ENCODE measurements at regions of chr16 and their contacts with region 1.

Region 1: DNA sequence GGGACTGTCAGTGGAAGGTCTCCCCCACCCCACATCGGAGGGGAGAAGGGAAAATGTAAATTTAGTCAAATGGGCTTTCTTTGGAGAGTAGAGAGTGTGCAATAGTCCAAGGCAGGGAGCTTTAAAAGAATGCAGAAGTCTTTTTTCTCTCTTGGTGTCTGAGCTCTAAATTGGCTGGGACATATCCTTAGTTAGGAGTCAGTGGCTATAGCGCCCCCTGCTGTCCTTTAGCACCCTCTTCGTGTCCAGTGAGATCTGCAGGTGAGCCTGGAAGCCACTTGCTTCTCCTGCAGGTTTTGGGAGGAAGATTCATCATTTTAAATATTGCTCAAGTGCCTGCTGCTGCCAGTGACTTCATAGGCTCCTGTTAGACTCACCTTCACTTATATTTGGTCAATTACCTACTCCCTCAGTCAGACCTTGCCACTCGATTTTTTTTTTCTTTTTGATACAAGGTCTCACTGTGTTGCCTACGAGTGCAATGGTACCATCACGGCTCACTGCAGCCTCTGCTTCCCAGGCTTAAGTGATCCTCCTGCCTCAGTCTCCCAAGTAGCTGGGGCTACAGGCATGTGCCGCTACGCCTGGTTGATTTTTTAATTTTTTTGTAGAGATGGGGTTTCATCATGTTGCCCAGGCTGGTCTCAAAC is 174.8 kb downstream of the PRKCB start:
- DNase-seq: peak; percentile 60
- ATAC-seq: peak; percentile 61
- H3K4me3 ChIP-seq: no peak overlapping the region
- H3K27ac ChIP-seq: peak overlapping the region; percentile 53; the same call in 1 of the 2 replicates
- H3K4me1 ChIP-seq: peaks cover 65% of the 10 kb centered on the region
- H3K27me3 ChIP-seq: no peaks in the 10 kb centered on the region
- CTCF ChIP-seq: peak; percentile 71 to 84 (median 81)
- EP300 ChIP-seq: no peak
- POLR2A ChIP-seq: no peak
- RAD21 ChIP-seq: peak; percentile 90

Region 2: GRCh38 chr16:23835390-23836077 is 175.0 kb before region 1 on chr16 and contains the start of gene PRKCB:
- CTCF ChIA-PET with region 1: interaction called, 38 read pairs
- POLR2A ChIA-PET with region 1: interaction called, 3 read pairs
- RAD21 ChIA-PET with region 1: interaction called, 39 read pairs
- SMC1A ChIA-PET with region 1: interaction called, 100 read pairs
- in situ Hi-C with region 1: no loop called
- intact Hi-C with region 1: loop called (anchors 1 kb)
- DNase-seq: no peak
- ATAC-seq: peak; percentile 74
- H3K4me3 ChIP-seq: peak within 1 kb of the TSS; percentile 97
- H3K27ac ChIP-seq: peak within 1 kb of the TSS; percentile 83
- H3K4me1 ChIP-seq: peaks cover 13% of the 10 kb centered on the region
- H3K27me3 ChIP-seq: no peaks in the 10 kb centered on the region
- CTCF ChIP-seq: no peak
- EP300 ChIP-seq: no peak
- POLR2A ChIP-seq: peak; percentile 74; the same call in 1 of the 2 replicates
- RAD21 ChIP-seq: no peak
- polyA plus RNA-seq, gene PRKCB: 42.4 to 60.2 TPM

Region 3: DNA sequence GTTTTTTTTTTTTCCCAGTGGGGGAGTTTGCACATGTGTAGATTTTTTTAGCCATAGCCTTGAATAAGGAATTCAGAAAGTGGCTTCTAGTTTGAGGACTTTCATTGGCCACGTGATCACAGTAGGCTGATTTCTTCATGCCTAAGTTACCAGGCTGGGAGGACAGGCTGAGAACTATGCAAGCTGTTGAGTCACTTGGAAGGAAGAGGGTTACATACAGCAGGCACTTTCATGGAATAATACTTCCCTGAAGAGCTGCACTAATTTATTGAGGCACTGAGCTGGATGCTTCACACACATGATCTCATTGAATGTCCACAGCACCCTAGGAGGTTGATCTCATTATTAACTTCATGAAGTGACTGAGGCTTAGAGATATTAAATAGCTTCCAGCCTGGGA is 152.0 kb before region 1 on chr16:
- CTCF ChIA-PET with region 1: interaction called, 30 read pairs
- POLR2A ChIA-PET with region 1: interaction called, 4 read pairs
- RAD21 ChIA-PET with region 1: interaction called, 13 read pairs
- SMC1A ChIA-PET with region 1: interaction called, 14 read pairs
- in situ Hi-C with region 1: no loop called
- intact Hi-C with region 1: loop called (anchors 5 kb)
- DNase-seq: no peak
- ATAC-seq: no peak
- H3K4me3 ChIP-seq: no peak overlapping the region
- H3K27ac ChIP-seq: peak overlapping the region; percentile 83
- H3K4me1 ChIP-seq: peaks cover 89% of the 10 kb centered on the region
- H3K27me3 ChIP-seq: no peaks in the 10 kb centered on the region
- CTCF ChIP-seq: no peak
- EP300 ChIP-seq: no peak
- POLR2A ChIP-seq: no peak
- RAD21 ChIP-seq: no peak

Region 4: DNA sequence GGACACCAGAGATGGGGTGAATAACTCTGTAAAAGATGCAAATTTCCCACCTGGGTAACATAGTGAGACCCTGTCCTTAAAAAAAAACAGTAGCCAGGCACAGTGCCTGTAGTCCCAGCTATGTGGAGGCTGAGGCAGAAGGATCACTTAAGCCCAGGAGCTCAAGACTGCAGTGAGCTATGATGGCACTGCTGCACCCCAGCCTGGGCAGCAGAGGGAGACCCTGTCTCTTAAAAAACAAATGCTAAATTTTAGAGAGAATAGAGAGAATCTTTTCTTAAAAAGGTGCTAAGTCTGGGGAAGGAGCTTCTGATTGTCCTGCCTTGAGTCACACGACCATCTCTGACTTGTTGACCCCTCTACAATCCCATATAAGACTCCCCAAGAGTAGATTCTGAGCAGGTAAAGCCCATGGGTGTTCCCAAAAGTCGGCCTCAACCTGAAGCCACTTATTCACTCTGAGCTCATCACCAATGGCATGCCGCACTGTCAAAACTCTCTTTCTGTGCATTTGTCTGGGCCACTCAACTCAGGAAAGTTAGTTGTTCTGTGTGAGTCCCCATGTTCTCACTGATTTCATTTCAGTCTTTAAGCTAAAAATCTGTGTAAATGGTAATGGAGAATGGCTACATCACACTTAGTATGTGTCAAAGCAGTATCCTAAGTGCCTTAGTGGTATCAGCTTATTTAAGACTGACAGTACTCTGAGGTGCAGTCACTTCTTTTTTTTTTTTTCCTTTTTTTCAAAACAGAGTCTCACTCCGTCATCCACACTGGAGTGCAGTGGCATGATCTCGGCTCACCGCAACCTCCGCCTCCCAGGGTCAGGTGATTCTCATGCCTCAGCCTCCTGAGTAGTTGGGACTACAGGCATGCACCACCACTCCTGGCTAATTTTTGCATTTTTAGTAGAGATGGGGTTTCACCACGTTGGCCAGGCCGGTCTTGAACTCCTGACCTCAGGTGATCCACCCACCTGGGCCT is 133.2 kb before region 1 on chr16:
- CTCF ChIA-PET with region 1: interaction called, 55 read pairs
- POLR2A ChIA-PET with region 1: interaction called, 4 read pairs
- RAD21 ChIA-PET with region 1: interaction called, 37 read pairs
- SMC1A ChIA-PET with region 1: interaction called, 27 read pairs
- in situ Hi-C with region 1: no loop called
- intact Hi-C with region 1: loop called (anchors 5 kb)
- DNase-seq: no peak
- ATAC-seq: no peak; the same call in 2 of the 3 replicates
- H3K4me3 ChIP-seq: no peak overlapping the region
- H3K27ac ChIP-seq: peak overlapping the region; percentile 69
- H3K4me1 ChIP-seq: peaks cover 63% of the 10 kb centered on the region
- H3K27me3 ChIP-seq: no peaks in the 10 kb centered on the region
- CTCF ChIP-seq: peak; percentile 23 to 28 (median 27); a peak in 2 of 6 replicates
- EP300 ChIP-seq: no peak
- POLR2A ChIP-seq: no peak
- RAD21 ChIP-seq: peak; percentile 53

Region 5: GRCh38 chr16:23917621-23918020 is 92.9 kb before region 1 on chr16:
- CTCF ChIA-PET with region 1: interaction called, 15 read pairs
- POLR2A ChIA-PET with region 1: interaction called, 4 read pairs
- RAD21 ChIA-PET with region 1: interaction called, 4 read pairs
- SMC1A ChIA-PET with region 1: interaction called, 5 read pairs
- in situ Hi-C with region 1: no loop called
- intact Hi-C with region 1: loop called (anchors 5 kb)
- DNase-seq: peak; percentile 76
- ATAC-seq: peak; percentile 79
- H3K4me3 ChIP-seq: peak overlapping the region; percentile 31; the same call in 1 of the 2 replicates
- H3K27ac ChIP-seq: peak overlapping the region; percentile 67
- H3K4me1 ChIP-seq: peaks cover 36% of the 10 kb centered on the region
- H3K27me3 ChIP-seq: no peaks in the 10 kb centered on the region
- CTCF ChIP-seq: no peak
- EP300 ChIP-seq: peak; percentile 53 to 66; a peak in 2 of 4 replicates
- POLR2A ChIP-seq: no peak
- RAD21 ChIP-seq: peak; percentile 18; the same call in 1 of the 2 replicates

Region 6: GRCh38 chr16:24036614-24037013 is 26.0 kb after region 1 on chr16:
- CTCF ChIA-PET with region 1: interaction called, 18 read pairs
- POLR2A ChIA-PET with region 1: interaction called, 5 read pairs
- RAD21 ChIA-PET with region 1: interaction called, 10 read pairs
- SMC1A ChIA-PET with region 1: interaction called, 4 read pairs
- in situ Hi-C with region 1: no loop called
- intact Hi-C with region 1: no loop called
- DNase-seq: no peak
- ATAC-seq: peak; percentile 69
- H3K4me3 ChIP-seq: no peak overlapping the region
- H3K27ac ChIP-seq: no peak overlapping the region
- H3K4me1 ChIP-seq: peaks cover 8% of the 10 kb centered on the region
- H3K27me3 ChIP-seq: no peaks in the 10 kb centered on the region
- CTCF ChIP-seq: peak; percentile 68 to 81 (median 72); a peak in 5 of 6 replicates
- EP300 ChIP-seq: no peak
- POLR2A ChIP-seq: no peak
- RAD21 ChIP-seq: peak; percentile 88